Activated CD8-positive, alpha-beta T cell treated with anti-CD3 and anti-CD28 coated beads for 36 hours (primary cell): ENCODE measurements at regions of chr7 and their contacts with region 1.

Region 1: DNA sequence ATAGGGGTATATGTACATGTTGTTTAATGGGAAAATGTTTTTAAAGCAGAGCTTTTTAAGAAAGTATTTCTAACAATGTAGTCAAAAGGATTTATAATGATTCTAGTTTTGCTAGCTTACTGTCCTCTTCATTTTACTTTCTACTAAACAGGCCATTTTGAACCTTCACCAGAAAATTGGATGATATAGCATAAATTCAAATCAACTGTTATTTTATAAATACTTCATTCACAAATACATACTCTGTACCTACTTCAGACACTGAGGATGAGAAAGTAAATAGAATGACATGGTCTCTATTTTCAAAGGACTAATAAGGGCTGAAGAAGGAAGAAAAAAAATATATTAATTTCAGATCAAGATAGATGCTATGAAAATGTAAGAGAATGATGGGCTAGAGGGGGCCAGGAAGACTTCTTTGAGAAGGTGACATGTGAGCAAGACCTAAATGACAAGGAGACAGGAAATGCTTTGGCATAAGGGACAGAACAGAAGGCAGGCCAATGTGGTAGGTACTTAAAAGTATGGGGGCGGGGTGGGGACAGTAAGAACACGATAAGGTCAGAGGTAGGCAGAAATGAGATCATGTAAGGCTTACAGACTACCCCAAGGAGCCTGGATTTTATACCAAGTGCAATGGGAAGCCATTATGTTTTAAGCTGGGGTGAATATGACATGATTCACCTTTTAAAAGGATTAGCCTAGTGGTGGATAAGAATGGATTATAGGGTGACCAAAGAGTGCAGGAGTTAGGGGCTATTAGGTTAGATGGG is 5.2 kb downstream of the NAMPT start:
- DNase-seq: peak; percentile 84
- ATAC-seq: peak; percentile 75
- H3K4me3 Mint-ChIP-seq: peak overlapping the region; percentile 88
- H3K27ac Mint-ChIP-seq: peak overlapping the region; percentile 96
- H3K4me1 Mint-ChIP-seq: peaks cover 43% of the 10 kb centered on the region
- H3K27me3 Mint-ChIP-seq: no peaks in the 10 kb centered on the region
- CTCF ChIP-seq: no peak

Region 2: DNA sequence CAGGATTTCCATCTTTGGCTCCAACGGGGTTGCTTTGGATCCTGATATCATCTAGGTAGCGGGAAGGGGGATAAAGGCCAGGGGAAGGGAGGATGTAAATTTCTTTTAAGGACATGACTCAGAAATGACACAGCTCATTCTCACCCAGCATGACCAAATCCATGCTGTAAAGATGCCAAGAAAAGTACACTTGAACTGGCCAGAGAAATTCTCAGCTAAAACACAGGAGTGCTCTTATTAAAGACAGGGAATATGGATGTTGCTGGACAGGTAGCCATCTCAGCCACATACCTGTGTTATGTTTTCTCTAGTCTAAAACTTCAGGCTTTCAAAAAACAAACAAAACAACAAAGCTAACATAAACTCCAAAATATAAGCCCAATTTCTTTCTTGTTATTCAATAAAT is 63.1 kb before region 1 on chr7:
- CTCF ChIA-PET with region 1: no interaction called
- POLR2A ChIA-PET with region 1: no interaction called
- intact Hi-C with region 1: no loop called
- DNase-seq: no peak
- ATAC-seq: no peak
- H3K4me3 Mint-ChIP-seq: no peak overlapping the region
- H3K27ac Mint-ChIP-seq: no peak overlapping the region
- H3K4me1 Mint-ChIP-seq: peaks cover 2% of the 10 kb centered on the region
- H3K27me3 Mint-ChIP-seq: peaks cover 12% of the 10 kb centered on the region
- CTCF ChIP-seq: no peak

Region 3: DNA sequence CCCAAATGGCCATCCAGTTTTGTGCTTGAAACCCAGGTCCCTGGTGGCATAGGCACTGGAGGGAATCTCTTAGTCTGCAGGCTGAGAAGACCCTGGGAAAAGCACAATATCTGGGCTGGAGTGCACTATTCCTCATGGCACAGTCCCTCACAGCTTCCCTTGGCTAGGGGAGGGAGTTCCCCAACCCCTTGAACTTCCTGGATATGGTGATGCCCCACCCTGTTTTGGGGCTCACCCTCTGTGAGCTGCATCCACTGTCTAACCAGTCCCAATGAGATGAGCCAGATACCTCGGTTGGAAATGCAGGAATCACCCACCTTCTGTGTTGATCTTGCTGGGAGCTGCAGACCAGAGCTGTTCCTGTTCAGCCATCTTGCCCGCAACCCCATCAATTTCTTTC is 25.0 kb after region 1 on chr7:
- CTCF ChIA-PET with region 1: no interaction called
- POLR2A ChIA-PET with region 1: no interaction called
- intact Hi-C with region 1: no loop called
- DNase-seq: no peak
- ATAC-seq: no peak
- H3K4me3 Mint-ChIP-seq: no peak overlapping the region
- H3K27ac Mint-ChIP-seq: no peak overlapping the region
- H3K4me1 Mint-ChIP-seq: peaks cover 4% of the 10 kb centered on the region
- H3K27me3 Mint-ChIP-seq: peaks cover 37% of the 10 kb centered on the region
- CTCF ChIP-seq: no peak

Region 4: GRCh38 chr7:106425017-106425719 is 145.6 kb after region 1 on chr7:
- CTCF ChIA-PET with region 1: interaction called, 6 read pairs
- POLR2A ChIA-PET with region 1: interaction called, 44 read pairs
- intact Hi-C with region 1: loop called (anchors 5 kb)
- DNase-seq: peak; percentile 93
- ATAC-seq: peak; percentile 88
- H3K4me3 Mint-ChIP-seq: peak overlapping the region; percentile 71
- H3K27ac Mint-ChIP-seq: peak overlapping the region; percentile 98
- H3K4me1 Mint-ChIP-seq: peaks cover 72% of the 10 kb centered on the region
- H3K27me3 Mint-ChIP-seq: peaks cover under 1% of the 10 kb centered on the region
- CTCF ChIP-seq: no peak